ENCODE measurements at regions of chr3 and their contacts with region 1.

Region 1: DNA sequence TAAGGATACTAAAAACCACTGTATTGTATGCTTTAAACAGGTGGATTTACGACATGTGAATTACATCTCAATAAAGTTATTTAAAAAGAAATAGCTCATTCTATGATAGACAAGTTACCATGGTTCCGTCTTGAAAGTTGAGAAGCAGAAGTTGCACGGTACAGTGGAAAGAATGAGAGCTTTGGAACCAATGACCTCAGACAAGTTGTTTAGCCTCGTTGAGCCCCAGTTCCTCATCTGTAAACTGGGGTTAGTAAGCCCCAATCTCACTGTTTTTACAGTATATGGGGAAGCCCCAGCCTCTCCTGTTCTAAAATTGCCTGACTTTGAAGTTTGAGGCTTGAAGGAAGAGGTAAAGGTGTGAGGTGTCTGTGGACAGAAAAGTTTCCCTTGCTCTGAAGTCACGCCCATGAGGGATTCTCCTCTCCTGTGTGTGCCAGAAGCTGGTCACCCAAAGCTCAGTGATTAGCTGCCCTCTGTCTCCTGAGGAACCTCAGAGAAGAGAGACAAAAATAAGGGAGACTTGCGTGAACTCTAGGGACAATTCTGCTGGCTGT is 10.0 kb downstream of the CRYGS start:
- DNase-seq: peak; percentile 59
- H3K4me3 Mint-ChIP-seq: peak overlapping the region; percentile 73
- H3K27ac Mint-ChIP-seq: peak overlapping the region; percentile 97
- H3K4me1 Mint-ChIP-seq: peaks cover 74% of the 10 kb centered on the region
- H3K27me3 Mint-ChIP-seq: no peaks in the 10 kb centered on the region

Region 2: DNA sequence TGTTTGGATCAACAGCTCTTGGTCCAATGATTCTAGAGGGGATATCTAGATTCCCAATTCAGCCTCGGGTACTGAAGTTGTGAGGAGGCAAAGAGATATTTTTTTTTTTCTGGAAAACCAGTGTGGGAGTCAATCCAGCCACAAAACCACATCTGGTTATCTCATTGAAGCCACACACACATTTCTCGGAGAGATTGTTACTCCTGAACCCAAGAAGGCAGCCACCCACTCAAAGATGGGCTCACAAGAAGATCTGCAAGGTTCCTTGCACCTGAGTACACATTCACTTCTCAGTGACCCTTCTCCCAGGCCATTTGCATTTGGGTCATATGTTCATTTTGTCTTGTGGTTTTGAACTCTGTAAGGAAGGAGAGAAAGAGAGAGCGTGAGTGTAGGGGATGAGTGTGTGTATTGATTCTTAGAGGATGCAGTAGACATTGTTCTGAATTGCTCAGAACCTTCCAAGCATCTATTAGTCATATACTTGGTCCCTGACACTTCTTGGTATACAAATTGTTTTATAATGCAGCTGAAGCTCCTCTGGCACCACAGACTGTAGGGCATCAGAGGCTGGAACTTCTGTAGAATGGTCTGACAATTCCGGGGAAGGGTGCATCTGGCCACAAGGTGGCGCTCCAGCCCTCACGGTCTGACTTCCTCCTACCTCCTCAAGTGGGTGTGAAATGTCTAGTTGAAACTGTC is 557.1 kb before region 1 on chr3:
- intact Hi-C with region 1: loop called (anchors 1 kb)
- DNase-seq: peak; percentile 71
- H3K4me3 Mint-ChIP-seq: peak overlapping the region; percentile 11
- H3K27ac Mint-ChIP-seq: peak overlapping the region; percentile 82
- H3K4me1 Mint-ChIP-seq: peaks cover 18% of the 10 kb centered on the region
- H3K27me3 Mint-ChIP-seq: peaks cover 37% of the 10 kb centered on the region

Region 3: GRCh38 chr3:186359078-186359477 is 175.1 kb before region 1 on chr3:
- intact Hi-C with region 1: no loop called
- DNase-seq: no peak
- H3K4me3 Mint-ChIP-seq: no peak overlapping the region
- H3K27ac Mint-ChIP-seq: no peak overlapping the region
- H3K4me1 Mint-ChIP-seq: no peaks in the 10 kb centered on the region
- H3K27me3 Mint-ChIP-seq: peaks cover 39% of the 10 kb centered on the region

Region 4: DNA sequence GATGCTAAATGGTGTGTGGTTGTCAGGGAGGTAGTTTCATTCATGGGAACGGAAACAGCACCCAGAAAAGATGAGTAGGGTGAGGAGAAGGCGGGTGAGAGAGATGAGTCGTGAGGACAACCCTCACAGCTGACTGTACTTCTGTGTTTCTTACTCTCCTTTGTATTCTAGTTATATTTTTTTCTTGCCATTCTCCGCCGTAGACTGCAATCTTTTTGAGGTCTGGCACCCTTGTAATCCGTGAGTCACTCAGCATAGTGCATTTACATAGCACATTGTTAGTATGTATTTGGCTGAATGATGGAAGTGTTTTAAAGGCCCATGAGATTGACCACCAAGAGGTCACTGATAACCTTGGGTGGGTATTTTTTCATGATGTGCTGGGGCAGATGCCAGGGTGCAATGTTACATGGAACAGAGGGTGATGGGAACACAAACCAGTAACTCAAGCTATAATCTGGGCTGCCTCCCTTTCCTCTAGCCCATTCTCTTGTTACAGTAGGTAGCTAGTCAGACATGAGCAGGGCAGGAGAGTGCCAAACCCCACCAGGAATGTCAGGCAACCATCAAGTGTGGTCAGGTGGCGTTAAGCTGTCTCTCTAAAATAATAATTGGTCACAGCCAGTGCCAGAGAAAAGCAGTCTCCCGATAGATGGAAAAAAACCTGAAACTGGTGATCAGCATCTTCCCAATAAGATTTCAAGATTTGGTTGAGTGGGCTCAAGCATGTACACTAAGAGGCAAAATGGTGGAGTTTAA is 153.4 kb before region 1 on chr3:
- intact Hi-C with region 1: loop called (anchors 1 kb)
- DNase-seq: no peak
- H3K4me3 Mint-ChIP-seq: no peak overlapping the region
- H3K27ac Mint-ChIP-seq: no peak overlapping the region
- H3K4me1 Mint-ChIP-seq: peaks cover 20% of the 10 kb centered on the region
- H3K27me3 Mint-ChIP-seq: peaks cover 8% of the 10 kb centered on the region

Region 5: DNA sequence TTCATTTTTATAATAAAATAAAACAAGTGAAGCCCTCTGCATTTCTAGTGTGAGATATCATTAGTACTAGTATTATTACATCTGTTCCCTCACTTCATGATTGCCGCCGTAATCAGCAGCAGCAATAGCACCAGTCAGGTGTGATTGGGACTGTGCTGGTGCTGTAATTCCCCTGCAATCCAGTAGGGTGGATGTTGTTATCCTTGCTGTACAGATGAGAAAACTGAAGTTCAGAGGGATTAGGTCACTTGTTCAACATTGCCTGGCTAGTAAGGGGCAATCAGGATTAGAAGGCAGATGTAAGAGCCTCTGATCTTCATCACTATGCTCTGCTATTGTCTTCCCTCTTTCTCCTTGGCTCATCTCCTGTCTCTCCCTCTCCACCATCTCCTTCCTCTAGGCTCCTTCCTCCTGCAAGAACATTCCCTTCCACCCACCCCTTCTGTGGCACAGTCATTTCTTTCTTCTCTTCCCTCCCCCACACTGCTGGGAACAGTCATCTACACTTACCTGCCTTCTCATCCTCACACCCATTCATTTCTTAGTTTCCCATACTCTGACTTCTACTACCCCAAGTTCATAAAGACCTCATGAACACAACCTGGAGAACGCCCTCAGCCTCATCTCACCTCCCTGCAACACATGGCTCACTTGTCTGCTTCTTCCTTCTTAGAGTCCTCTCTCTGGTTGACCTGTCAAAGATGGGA is 19.7 kb before region 1 on chr3:
- intact Hi-C with region 1: loop called (anchors 1 kb)
- DNase-seq: no peak
- H3K4me3 Mint-ChIP-seq: peak overlapping the region; percentile 1
- H3K27ac Mint-ChIP-seq: peak overlapping the region; percentile 75
- H3K4me1 Mint-ChIP-seq: peaks cover 58% of the 10 kb centered on the region
- H3K27me3 Mint-ChIP-seq: peaks cover 5% of the 10 kb centered on the region

Region 6: GRCh38 chr3:186679151-186679550 is 145.0 kb after region 1 on chr3:
- intact Hi-C with region 1: no loop called
- DNase-seq: no peak
- H3K4me3 Mint-ChIP-seq: no peak overlapping the region
- H3K27ac Mint-ChIP-seq: no peak overlapping the region
- H3K4me1 Mint-ChIP-seq: no peaks in the 10 kb centered on the region
- H3K27me3 Mint-ChIP-seq: peaks cover 60% of the 10 kb centered on the region

Region 7: DNA sequence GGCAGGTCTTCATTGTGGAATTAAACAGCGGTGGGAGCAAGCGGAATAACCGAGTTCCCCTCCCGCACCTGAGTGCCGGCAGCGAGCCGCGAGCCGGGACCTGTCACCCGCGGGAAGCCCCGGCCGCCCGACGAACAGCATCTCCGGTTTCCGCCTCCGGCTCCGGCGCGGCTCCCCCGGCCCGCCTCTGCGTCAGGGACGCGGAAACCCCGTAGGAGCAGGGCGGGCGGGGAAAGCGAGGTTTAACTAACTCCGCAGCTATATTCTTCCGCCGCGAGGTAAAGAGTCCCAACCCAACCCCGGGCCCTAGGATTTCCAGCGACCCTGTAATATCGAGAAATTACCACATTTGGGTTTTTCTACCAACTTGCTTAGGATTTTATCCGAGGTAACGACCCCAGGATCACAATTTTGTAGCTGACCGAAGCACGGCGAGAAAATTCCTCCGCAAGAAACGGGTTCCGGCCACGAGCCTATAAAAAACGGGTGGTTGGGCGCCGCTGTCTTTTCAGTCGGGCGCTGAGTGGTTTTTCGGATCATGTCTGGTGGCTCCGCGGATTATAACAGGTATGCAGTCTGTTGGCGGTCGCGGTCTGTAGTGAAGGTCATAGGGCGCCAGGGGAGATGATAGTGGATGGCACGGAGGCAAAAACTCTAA is 249.0 kb after region 1 on chr3 and contains the start of gene EIF4A2:
- intact Hi-C with region 1: loop called (anchors 1 kb)
- DNase-seq: peak; percentile 89
- H3K4me3 Mint-ChIP-seq: peak within 1 kb of the TSS; percentile 95
- H3K27ac Mint-ChIP-seq: peak within 1 kb of the TSS; percentile 94
- H3K4me1 Mint-ChIP-seq: peaks cover 41% of the 10 kb centered on the region
- H3K27me3 Mint-ChIP-seq: no peaks in the 10 kb centered on the region
- total RNA-seq, gene EIF4A2: 491 and 514 TPM in 2 replicates

Measured in activated T-helper 1 cell treated with anti-CD3 and anti-CD28 coated beads, Interleukin-12 subunit alpha, Interleukin-12 subunit beta, Interleukin-2, Interleukin-4 antibody, amounts not matched to agents 30 ng/mL and 10 ng/mL and 1 ng/mL, durations not matched to agents 14 hours and 24 hours and 36 hours (primary cell).